Endothelial cell of umbilical vein (primary cell): ENCODE measurements at regions of chr5 and their contacts with region 1.

Region 1: GRCh38 chr5:157366741-157367674 is 93.0 kb upstream of the NIPAL4 start:
- DNase-seq: peak; percentile 70
- H3K4me3 ChIP-seq: no peak overlapping the region
- H3K27ac ChIP-seq: no peak overlapping the region
- H3K4me1 ChIP-seq: no peaks in the 10 kb centered on the region
- H3K27me3 ChIP-seq: no peaks in the 10 kb centered on the region
- CTCF ChIP-seq: peak; percentile 60 to 71
- POLR2A ChIP-seq: no peak

Region 2: GRCh38 chr5:157328277-157328912 is 38.6 kb before region 1 on chr5:
- CTCF ChIA-PET with region 1: interaction called, 5 read pairs
- POLR2A ChIA-PET with region 1: no interaction called
- dilution Hi-C with region 1: no loop called
- intact Hi-C with region 1: loop called (anchors 1 kb)
- DNase-seq: peak; percentile 71
- H3K4me3 ChIP-seq: no peak overlapping the region
- H3K27ac ChIP-seq: no peak overlapping the region
- H3K4me1 ChIP-seq: no peaks in the 10 kb centered on the region
- H3K27me3 ChIP-seq: no peaks in the 10 kb centered on the region
- CTCF ChIP-seq: peak; percentile 91 to 93
- POLR2A ChIP-seq: no peak

Region 3: DNA sequence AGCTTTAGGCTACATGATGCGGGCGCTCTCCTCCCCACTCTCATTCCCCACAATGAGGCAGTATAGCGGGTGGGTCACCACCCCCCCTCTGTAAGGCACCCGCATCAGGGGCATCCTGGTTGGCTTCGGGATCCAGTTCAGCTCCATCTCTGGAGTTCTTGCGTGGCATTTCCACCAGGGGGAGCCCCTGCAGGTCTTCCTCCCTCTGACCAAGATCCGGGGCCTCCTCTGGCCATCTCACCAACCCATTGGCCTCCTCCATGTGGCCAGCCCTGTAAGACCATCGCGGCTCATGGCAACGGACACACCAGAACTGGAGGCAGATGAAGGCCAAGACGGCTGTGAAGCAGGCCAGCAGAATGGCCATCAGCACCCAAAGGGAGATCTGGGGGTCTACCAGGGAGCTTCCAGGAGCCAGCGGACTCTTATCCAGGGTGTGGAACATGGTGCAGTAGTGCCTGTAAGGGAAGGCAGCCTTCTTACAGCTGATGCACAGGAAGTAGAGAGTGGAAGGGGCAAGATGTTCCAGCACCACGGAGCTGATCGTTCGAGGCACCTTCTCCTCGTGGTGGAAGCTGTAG is 24.1 kb before region 1 on chr5:
- CTCF ChIA-PET with region 1: interaction called, 37 read pairs
- POLR2A ChIA-PET with region 1: no interaction called
- dilution Hi-C with region 1: no loop called
- intact Hi-C with region 1: no loop called
- DNase-seq: peak; percentile 28
- H3K4me3 ChIP-seq: no peak overlapping the region
- H3K27ac ChIP-seq: no peak overlapping the region
- H3K4me1 ChIP-seq: no peaks in the 10 kb centered on the region
- H3K27me3 ChIP-seq: peaks cover 0 to 3% of the 10 kb centered on the region in 2 experiments
- CTCF ChIP-seq: peak; percentile 65
- POLR2A ChIP-seq: no peak

Region 4: DNA sequence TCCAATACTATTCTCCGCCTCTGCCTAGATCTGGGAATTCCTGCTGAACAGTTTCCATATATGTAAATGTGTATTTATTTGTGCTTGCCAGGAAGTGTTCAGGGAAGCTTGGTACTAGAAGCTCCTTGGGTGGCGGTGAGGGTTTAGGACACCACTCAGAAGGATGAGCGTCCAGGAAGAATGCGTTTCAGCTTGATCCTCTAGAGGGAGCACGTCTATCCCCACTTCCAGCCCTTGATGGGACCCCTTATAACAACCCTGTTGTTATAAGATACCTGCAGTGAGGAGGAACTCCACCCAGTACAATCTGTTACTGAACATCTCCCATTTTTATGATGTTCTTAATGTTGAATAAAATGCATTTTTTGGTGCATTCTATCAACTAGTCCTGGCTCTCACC is 12.2 kb before region 1 on chr5:
- CTCF ChIA-PET with region 1: interaction called, 11 read pairs
- POLR2A ChIA-PET with region 1: interaction called, 8 read pairs
- dilution Hi-C with region 1: no loop called
- intact Hi-C with region 1: loop called (anchors 1 kb)
- DNase-seq: no peak
- H3K4me3 ChIP-seq: no peak overlapping the region
- H3K27ac ChIP-seq: no peak overlapping the region
- H3K4me1 ChIP-seq: peaks cover 13% of the 10 kb centered on the region
- H3K27me3 ChIP-seq: no peaks in the 10 kb centered on the region
- CTCF ChIP-seq: peak; percentile 17 to 31
- POLR2A ChIP-seq: no peak

Region 5: DNA sequence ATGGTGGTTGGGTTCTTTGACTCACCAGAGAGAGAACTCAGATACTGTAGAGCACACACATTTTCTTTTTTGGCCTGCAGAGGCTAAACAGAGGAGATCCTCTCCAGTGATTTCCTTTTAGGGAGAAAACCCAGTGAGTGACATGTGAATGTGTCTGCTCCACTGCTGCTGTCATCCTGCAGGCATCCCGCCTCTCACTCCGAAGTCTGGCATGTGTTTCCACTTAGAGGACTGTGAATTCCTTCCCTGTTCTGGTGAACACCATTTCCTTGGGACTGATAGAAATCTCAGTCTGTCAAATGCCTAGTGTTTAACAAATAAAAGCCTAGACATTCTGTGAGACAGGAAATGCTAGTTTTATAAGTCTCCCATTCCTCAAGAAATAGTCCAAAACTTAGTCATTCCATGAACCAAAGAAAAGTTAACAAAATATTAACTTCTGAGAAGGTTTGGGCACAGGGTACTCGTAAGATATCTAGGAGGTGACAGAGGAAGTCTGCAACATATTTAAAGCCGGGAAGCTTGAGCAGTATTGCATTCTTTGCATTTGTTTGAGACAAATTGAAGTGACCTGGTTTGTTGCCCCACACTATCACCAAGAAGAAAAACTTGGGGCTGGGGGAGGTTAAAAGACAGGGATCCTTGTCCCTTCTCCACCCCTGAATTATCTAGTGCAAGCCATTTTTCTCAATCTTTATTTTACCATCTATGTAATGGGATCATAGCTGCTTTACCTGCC is 18.1 kb after region 1 on chr5:
- CTCF ChIA-PET with region 1: interaction called, 5 read pairs
- POLR2A ChIA-PET with region 1: no interaction called
- dilution Hi-C with region 1: no loop called
- intact Hi-C with region 1: loop called (anchors 2 kb)
- DNase-seq: peak; percentile 91
- H3K4me3 ChIP-seq: no peak overlapping the region
- H3K27ac ChIP-seq: peak overlapping the region; percentile 88
- H3K4me1 ChIP-seq: peaks cover 57% of the 10 kb centered on the region
- H3K27me3 ChIP-seq: no peaks in the 10 kb centered on the region
- CTCF ChIP-seq: no peak
- POLR2A ChIP-seq: no peak

Region 6: GRCh38 chr5:157431544-157432200 is 64.7 kb after region 1 on chr5:
- CTCF ChIA-PET with region 1: interaction called, 4 read pairs
- POLR2A ChIA-PET with region 1: interaction called, 4 read pairs
- dilution Hi-C with region 1: no loop called
- intact Hi-C with region 1: loop called (anchors 5 kb)
- DNase-seq: peak; percentile 64
- H3K4me3 ChIP-seq: no peak overlapping the region
- H3K27ac ChIP-seq: no peak overlapping the region
- H3K4me1 ChIP-seq: no peaks in the 10 kb centered on the region
- H3K27me3 ChIP-seq: no peaks in the 10 kb centered on the region
- CTCF ChIP-seq: peak; percentile 16 to 20
- POLR2A ChIP-seq: no peak

Region 7: DNA sequence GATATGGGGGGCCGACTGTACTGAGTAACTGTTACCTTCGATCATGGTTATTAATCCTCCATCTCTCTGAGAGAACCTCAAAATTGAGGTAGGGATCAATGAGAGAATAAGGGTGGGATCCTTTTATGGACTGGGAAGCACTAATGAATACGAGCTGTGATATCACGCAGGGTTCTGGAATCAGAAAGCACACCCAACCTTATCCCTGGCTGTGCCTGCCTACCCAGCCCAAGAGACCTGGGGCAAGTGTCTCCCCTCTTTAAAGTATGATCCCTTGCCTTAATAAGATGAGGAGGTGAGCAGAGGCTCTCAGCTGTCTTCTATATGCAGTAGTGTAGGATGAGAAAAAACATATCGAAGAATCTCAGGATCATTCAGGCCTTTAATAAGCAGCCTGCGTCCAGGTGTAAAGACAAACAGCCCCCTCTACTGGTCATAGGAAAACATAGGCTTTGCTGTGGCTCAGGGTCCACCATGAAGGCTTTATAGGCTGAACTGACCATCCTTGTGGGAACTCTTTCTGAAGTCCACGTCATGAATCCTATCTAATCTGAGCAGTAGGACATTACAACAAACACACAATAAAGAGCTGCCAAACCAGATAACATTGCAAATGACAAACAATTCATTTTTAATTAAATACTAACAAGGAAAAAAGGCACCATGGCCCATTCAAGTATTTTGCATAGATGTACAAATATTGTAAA is 109.8 kb after region 1 on chr5:
- CTCF ChIA-PET with region 1: interaction called, 25 read pairs
- POLR2A ChIA-PET with region 1: interaction called, 4 read pairs
- dilution Hi-C with region 1: no loop called
- intact Hi-C with region 1: loop called (anchors 1 kb)
- DNase-seq: peak; percentile 67
- H3K4me3 ChIP-seq: no peak overlapping the region
- H3K27ac ChIP-seq: no peak overlapping the region
- H3K4me1 ChIP-seq: peaks cover 6% of the 10 kb centered on the region
- H3K27me3 ChIP-seq: peaks cover 0 to 2% of the 10 kb centered on the region in 2 experiments
- CTCF ChIP-seq: peak; percentile 73 to 77
- POLR2A ChIP-seq: no peak

Region 8: DNA sequence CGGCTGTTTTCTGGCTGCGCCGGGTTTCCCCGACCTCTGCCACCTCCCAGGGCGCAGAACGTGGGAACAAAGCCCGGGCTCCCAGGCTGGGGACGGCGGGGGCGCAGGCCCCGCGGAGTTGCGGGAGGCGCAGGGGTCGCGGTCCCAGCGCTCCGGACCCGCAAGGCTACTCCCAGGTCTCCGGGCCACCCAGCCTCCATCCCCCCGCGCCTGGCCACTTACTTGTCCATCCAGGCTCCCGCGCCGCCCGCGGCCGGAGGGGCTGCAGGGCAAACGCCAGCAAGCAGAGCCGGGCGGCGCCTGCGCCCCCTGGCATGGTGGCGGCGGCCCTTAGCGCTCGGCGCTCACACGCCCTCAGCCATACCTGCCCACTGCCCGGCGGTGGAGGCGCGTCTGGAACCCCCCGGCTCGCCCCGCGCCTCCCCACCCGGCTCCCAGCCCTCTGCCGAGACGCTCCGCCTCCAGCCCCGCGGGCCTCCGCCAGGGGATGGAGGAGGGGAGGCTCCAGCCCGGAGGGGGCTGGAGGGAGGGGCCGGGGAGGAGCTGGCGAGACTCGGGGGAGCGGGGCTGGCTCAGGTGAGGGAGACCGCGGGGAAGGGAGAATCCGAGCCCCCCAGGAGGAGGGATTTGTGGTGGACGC is 208.5 kb after region 1 on chr5 and contains the start of gene ADAM19:
- CTCF ChIA-PET with region 1: no interaction called
- POLR2A ChIA-PET with region 1: no interaction called
- dilution Hi-C with region 1: no loop called
- intact Hi-C with region 1: no loop called
- DNase-seq: peak; percentile 68
- H3K4me3 ChIP-seq: peak within 1 kb of the TSS; percentile 57 to 69 (median 63)
- H3K27ac ChIP-seq: peak within 1 kb of the TSS; percentile 25
- H3K4me1 ChIP-seq: peaks cover 10% of the 10 kb centered on the region
- H3K27me3 ChIP-seq: peaks cover 7% of the 10 kb centered on the region in 2 experiments
- CTCF ChIP-seq: no peak
- POLR2A ChIP-seq: peak; percentile 56
- total RNA-seq, gene ADAM19: 22.6 and 23.8 TPM in 2 replicates